ENCODE measurements at regions of chr17 and their contacts with region 1.

Region 1: DNA sequence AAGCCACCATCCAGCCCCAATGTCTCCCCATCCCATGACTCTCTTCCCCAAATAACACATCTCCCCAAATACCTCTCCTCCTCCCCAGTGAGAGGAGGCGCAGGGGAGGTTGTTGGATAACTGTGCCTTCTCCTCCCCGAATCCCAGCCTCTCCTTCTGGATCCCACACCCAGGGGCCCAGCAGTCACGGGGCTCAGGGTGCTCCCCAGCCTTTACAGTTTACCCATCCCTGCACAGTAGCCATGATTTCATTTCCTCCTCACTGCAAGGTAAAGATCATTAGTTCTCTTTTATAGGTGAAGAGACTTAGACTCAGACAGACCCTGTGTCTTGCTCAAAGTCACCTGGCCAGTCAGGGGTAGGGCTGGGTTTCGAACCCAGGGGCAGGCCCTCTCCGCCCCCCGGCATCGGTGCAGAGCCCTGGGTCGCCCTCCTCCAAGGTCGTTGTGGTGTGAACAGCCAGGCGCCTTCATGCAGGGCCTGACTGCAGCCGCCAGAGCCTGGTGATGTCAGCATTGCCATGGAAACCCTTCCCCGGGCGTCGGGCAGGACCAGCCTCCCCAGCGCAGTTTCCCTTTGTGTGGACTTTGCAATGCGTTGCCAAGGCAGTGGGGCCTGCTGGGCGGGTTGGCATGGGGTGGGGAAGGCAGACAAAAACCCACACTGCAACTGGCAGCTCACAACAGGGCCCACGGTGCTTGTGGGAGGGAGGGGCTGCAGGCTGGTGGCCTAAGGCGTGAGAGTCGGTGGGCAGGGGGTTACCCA is 53.3 kb upstream of the TOB1 start:
- DNase-seq: peak; percentile 91
- H3K4me3 ChIP-seq: no peak overlapping the region
- H3K27ac ChIP-seq: peak overlapping the region; percentile 83
- H3K4me1 ChIP-seq: peaks cover 57% of the 10 kb centered on the region
- H3K27me3 ChIP-seq: no peaks in the 10 kb centered on the region
- CTCF ChIP-seq: no peak

Region 2: DNA sequence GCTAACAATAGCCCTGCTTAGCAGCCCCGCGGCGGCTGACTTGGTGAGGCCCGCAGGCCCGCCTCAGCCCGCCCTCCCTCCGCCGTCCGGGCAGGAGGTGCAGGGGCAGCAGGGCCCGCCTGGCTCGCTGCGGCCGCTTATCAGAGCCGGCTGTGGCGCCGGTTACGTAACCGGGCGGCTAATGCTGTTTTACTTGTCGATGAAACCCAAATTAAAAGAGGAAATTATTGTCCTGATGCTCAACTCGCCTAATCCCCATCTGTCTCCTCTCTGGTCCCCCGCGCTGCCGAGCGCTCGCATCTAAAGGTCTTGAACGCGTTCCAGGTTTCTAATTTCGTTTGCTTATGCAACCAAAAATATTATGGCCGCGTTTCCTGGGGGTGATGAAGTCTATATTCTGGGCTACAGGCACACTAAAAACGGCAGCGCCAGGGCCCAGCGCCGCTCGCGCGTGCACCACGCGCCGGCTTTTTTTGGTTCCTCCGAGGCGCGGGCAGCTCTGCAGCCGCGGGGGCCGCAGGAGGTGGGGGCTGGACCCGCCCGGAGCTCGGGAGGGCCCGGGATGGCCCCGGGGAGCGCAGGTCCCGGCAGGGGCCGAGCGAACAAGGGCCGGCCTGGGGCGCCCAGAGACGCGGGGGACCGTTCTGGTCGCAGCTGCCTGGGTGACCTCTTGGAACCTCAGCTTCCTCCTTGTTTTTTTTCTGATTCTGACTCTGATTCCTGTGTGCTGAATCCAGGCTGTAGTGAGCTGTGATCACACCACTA is 11.8 kb after region 1 on chr17:
- CTCF ChIA-PET with region 1: interaction called, 3 read pairs
- dilution Hi-C with region 1: no loop called
- in situ Hi-C with region 1: no loop called
- intact Hi-C with region 1: loop called (anchors 1 kb)
- DNase-seq: peak; percentile 73
- H3K4me3 ChIP-seq: peak overlapping the region in 2 of 3 experiments; percentile 21 to 27
- H3K27ac ChIP-seq: peak overlapping the region; percentile 88
- H3K4me1 ChIP-seq: peaks cover 61% of the 10 kb centered on the region
- H3K27me3 ChIP-seq: no peaks in the 10 kb centered on the region
- CTCF ChIP-seq: no peak